ENCODE measurements at regions of chr11 and their contacts with region 1.

Region 1: DNA sequence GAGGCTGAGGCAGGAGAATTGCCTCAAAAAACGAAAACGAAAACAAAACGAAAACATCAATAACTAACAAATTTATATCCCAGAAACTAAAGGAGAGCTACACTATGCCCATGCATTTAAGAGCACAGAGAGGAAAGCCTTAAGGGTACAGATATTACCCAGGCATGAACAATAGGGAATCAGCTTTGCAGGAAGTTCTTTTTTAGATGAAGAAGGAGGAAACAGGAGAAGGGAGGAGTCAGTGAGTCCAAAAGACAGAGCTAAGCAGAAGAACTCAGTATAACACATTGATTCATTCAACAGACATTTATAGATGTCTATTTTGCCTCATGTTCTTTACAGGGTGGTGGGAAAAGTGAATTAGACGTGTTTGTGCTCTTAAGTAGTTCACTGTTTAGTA is 8.3 kb downstream of the MRPL17 start:
- DNase-seq: no peak
- H3K4me3 ChIP-seq: no peak overlapping the region
- H3K27ac ChIP-seq: no peak overlapping the region
- H3K4me1 ChIP-seq: no peaks in the 10 kb centered on the region
- H3K27me3 ChIP-seq: no peaks in the 10 kb centered on the region
- CTCF ChIP-seq: no peak

Region 2: GRCh38 chr11:6635082-6635932 is 39.6 kb before region 1 on chr11:
- intact Hi-C with region 1: loop called (anchors 5 kb)
- DNase-seq: no peak
- H3K4me3 ChIP-seq: no peak overlapping the region
- H3K27ac ChIP-seq: peak overlapping the region; percentile 48 to 62
- H3K4me1 ChIP-seq: peaks cover 14 to 38% of the 10 kb centered on the region in 2 donors
- H3K27me3 ChIP-seq: no peaks in the 10 kb centered on the region
- CTCF ChIP-seq: no peak

Measured in ascending aorta (tissue), 2 donors.